ENCODE measurements at regions of chr16 and their contacts with region 1.

Region 1: GRCh38 chr16:73804456-73804855 is 492.2 kb upstream of the PSMD7 start:
- DNase-seq: no peak
- H3K4me3 ChIP-seq: no peak overlapping the region
- CTCF ChIP-seq: no peak

Region 2: GRCh38 chr16:73852561-73852960 is 48.1 kb after region 1 on chr16:
- in situ Hi-C with region 1: loop called (anchors 10 kb)
- DNase-seq: no peak
- H3K4me3 ChIP-seq: no peak overlapping the region
- CTCF ChIP-seq: no peak

Measured in astrocyte of the cerebellum (primary cell).